ENCODE measurements at regions of chr22 and their contacts with region 1.

Region 1: DNA sequence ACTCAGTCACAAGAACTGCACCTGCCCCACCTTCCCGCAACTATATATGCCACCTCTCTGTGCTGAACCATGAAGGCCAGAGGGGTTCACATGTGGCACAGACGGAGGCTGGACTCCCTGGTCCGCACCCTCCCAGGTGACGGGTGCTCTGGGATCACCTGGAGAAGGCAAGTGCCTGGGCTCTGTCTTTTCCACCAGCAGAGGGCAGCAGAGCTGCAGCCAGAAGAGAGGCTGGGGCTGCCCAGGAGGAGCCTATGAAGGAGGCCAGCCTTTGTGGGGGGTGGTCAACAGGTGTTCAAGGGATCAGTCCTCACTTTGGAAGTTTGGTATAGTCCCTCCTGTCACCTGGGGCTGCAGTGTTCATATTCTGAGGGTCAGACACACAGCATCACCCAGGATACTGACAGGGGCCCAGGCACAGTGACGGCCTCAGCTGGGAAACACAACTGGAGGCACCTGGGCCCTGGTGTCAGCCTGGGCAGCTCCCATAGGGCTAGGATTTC is 39.2 kb upstream of the IGLL5 start:
- DNase-seq: peak; percentile 82
- ATAC-seq: peak; percentile 93
- H3K4me3 Mint-ChIP-seq: no peak overlapping the region
- H3K27ac Mint-ChIP-seq: no peak overlapping the region
- H3K4me1 Mint-ChIP-seq: peaks cover 32% of the 10 kb centered on the region
- H3K27me3 Mint-ChIP-seq: no peaks in the 10 kb centered on the region
- CTCF ChIP-seq: peak; percentile 97

Region 2: GRCh38 chr22:22787786-22788459 is 60.5 kb before region 1 on chr22:
- CTCF ChIA-PET with region 1: interaction called, 41 read pairs
- POLR2A ChIA-PET with region 1: no interaction called
- intact Hi-C with region 1: no loop called
- DNase-seq: peak; percentile 81
- ATAC-seq: peak; percentile 84
- H3K4me3 Mint-ChIP-seq: no peak overlapping the region
- H3K27ac Mint-ChIP-seq: peak overlapping the region; percentile 46
- H3K4me1 Mint-ChIP-seq: peaks cover 34% of the 10 kb centered on the region
- H3K27me3 Mint-ChIP-seq: no peaks in the 10 kb centered on the region
- CTCF ChIP-seq: peak; percentile 89

Region 3: DNA sequence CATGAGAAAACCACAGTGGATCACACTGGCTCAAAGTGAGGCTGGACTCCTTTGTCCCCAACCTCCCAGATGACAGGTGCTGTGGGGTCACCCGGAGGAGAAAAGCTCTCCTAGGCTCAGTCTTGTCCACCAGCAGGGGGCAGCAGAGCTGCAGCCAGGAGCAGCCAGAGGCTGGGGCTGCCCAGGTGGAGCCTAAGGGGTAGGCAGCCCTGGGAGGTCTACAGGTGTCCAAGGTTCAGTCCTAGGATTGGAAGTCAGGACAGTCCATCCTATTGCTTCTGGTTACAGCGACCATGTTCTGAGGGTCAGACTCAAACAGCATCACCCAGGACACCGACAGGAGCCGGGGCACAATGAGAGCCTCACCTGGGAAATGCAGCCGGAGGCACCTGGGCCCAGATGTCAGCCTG is 38.4 kb before region 1 on chr22:
- CTCF ChIA-PET with region 1: interaction called, 92 read pairs
- POLR2A ChIA-PET with region 1: no interaction called
- intact Hi-C with region 1: no loop called
- DNase-seq: peak; percentile 72
- ATAC-seq: peak; percentile 78
- H3K4me3 Mint-ChIP-seq: no peak overlapping the region
- H3K27ac Mint-ChIP-seq: no peak overlapping the region
- H3K4me1 Mint-ChIP-seq: peaks cover 25% of the 10 kb centered on the region
- H3K27me3 Mint-ChIP-seq: no peaks in the 10 kb centered on the region
- CTCF ChIP-seq: peak; percentile 72

Region 4: DNA sequence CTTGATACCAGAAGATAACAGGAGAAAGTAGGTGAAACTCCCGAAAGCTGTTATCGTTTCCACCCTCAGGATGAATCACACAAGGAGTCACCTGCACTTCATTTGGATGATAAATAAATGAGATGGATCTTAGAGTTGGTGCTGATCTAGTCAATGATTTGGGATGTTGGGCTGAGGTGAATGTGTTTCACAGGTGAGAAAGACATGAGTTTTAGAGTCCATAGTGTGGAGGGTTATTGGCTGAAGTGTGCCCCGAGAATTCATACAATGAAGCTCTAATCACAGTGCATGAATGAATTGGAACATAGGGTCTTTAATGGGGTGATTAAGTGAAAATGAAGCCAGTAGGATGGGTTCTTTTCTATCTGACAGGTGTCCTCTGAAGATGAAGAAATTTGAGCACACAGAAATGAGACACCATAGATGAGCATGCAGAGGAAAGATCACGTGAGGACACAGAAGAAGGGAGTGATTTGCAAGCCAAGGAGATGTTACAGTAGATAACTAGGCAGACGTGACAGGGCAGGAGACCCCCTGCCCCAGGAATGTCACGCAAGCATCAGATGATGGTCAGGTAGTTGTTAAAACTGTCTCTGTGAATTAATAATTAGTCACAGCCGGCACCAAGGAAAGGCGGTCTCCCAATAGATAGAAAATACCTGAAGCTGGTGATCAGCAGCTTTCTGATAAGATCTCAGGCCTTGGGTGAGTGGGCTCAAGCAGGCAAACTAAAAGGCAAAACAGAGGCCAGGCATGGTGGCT is 21.0 kb before region 1 on chr22:
- CTCF ChIA-PET with region 1: interaction called, 23 read pairs
- POLR2A ChIA-PET with region 1: no interaction called
- intact Hi-C with region 1: no loop called
- DNase-seq: no peak
- ATAC-seq: no peak
- H3K4me3 Mint-ChIP-seq: no peak overlapping the region
- H3K27ac Mint-ChIP-seq: no peak overlapping the region
- H3K4me1 Mint-ChIP-seq: peaks cover 30% of the 10 kb centered on the region
- H3K27me3 Mint-ChIP-seq: no peaks in the 10 kb centered on the region
- CTCF ChIP-seq: no peak

Region 5: DNA sequence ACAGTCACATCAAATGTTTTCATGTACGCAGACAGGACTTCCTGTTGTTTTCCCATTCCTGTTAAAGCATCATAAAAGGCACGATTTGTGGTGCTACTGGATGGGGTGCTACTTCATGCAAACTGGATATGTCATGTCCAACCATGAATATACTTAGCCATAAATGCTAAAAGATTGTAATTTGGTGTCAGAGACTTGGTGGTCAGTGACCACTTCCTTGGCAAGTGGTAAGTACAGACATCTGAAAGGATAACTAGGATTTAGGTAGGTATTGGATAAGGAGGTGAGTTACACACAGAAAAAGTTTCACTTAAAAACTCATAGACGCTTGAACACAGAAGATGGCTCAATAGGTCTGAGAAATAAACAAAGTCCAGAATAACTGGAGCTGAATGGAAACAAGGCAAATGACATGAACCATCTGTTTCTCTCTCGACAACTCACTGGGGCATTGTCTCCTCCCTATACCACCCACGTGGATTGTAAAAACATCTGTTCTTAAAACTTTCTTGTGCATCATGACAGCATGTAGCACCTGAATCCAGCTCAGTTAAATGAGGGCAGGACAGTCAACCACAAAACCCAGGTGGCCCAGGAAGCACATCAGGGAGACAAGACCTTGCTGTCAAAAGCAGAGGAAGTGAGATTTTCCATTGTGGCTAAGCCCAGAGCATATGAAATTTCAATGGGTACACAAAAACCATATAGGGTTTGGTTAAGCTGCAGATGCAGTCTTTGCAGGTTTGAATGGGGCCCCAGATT is 17.1 kb after region 1 on chr22:
- CTCF ChIA-PET with region 1: interaction called, 17 read pairs
- POLR2A ChIA-PET with region 1: no interaction called
- intact Hi-C with region 1: no loop called
- DNase-seq: peak; percentile 77
- ATAC-seq: peak; percentile 82
- H3K4me3 Mint-ChIP-seq: no peak overlapping the region
- H3K27ac Mint-ChIP-seq: peak overlapping the region; percentile 35
- H3K4me1 Mint-ChIP-seq: peaks cover 41% of the 10 kb centered on the region
- H3K27me3 Mint-ChIP-seq: no peaks in the 10 kb centered on the region
- CTCF ChIP-seq: no peak

Region 6: GRCh38 chr22:22877523-22878210 is 29.3 kb after region 1 on chr22:
- CTCF ChIA-PET with region 1: interaction called, 122 read pairs
- POLR2A ChIA-PET with region 1: no interaction called
- intact Hi-C with region 1: loop called (anchors 5 kb)
- DNase-seq: peak; percentile 77
- ATAC-seq: no peak
- H3K4me3 Mint-ChIP-seq: no peak overlapping the region
- H3K27ac Mint-ChIP-seq: no peak overlapping the region
- H3K4me1 Mint-ChIP-seq: peaks cover 2% of the 10 kb centered on the region
- H3K27me3 Mint-ChIP-seq: no peaks in the 10 kb centered on the region
- CTCF ChIP-seq: peak; percentile 82

Measured in activated CD8-positive, alpha-beta T cell treated with anti-CD3 and anti-CD28 coated beads for 36 hours (primary cell).